AG04449 (cell line): ENCODE measurements at regions of chr10 and their contacts with region 1.

Region 1: DNA sequence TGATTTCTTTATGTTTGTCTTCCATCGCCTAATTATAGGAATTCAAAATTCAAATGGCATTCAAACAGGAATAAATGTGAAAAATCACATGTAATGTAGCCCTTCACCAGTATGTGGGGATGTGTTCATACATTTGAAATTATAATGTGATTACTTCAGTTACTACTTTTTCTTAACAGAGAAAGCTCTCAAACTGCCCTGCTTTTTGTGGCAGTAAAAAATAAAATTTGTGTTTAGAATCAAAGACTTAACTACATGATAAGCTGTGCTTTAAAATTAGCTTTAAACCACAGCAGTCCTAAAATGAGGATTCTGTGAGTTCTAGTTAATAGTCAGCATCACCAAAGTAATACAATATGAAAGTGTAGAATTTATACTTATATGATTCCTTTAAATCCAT is 7.8 kb upstream of the HERC4 start:
- DNase-seq: no peak
- H3K4me3 ChIP-seq: no peak overlapping the region
- CTCF ChIP-seq: peak; percentile 53

Region 2: GRCh38 chr10:68144709-68145108 is 61.8 kb after region 1 on chr10:
- CTCF ChIA-PET with region 1: interaction called, 10 read pairs
- POLR2A ChIA-PET with region 1: no interaction called
- DNase-seq: no peak
- H3K4me3 ChIP-seq: no peak overlapping the region
- CTCF ChIP-seq: no peak

Region 3: DNA sequence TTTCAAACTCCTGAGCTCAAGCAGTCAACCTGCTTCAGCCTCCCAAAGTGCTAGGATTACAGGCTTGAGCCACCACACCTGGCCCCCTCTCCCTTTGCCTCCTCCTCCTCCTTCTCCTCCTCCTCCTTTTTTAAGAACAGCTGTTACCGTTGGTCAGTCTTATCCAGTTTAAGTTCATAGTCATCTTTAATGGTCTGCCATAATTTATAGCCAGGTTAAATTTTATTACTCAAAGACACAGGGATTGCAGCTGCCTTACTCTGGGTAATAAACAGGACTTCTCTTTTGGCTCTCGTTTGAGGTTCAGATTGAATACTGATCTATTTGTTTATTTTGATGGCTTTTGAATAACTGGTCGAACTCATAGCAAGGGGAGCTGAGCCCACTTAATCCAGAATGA is 113.8 kb after region 1 on chr10:
- CTCF ChIA-PET with region 1: interaction called, 11 read pairs
- POLR2A ChIA-PET with region 1: no interaction called
- DNase-seq: no peak
- H3K4me3 ChIP-seq: no peak overlapping the region
- CTCF ChIP-seq: no peak